ENCODE measurements at regions of chr7 and their contacts with region 1.

Region 1: GRCh38 chr7:117750612-117751563 is 122.4 kb downstream of the CTTNBP2 start:
- DNase-seq: peak; percentile 39
- H3K4me3 Mint-ChIP-seq: no peak overlapping the region
- H3K27ac Mint-ChIP-seq: no peak overlapping the region
- H3K4me1 Mint-ChIP-seq: no peaks in the 10 kb centered on the region
- H3K27me3 Mint-ChIP-seq: no peaks in the 10 kb centered on the region
- CTCF ChIP-seq: peak; percentile 64

Region 2: GRCh38 chr7:117772421-117772820 is 21.5 kb after region 1 on chr7:
- CTCF ChIA-PET with region 1: interaction called, 13 read pairs
- POLR2A ChIA-PET with region 1: no interaction called
- intact Hi-C with region 1: no loop called
- DNase-seq: no peak
- H3K4me3 Mint-ChIP-seq: no peak overlapping the region
- H3K27ac Mint-ChIP-seq: no peak overlapping the region
- H3K4me1 Mint-ChIP-seq: peaks cover 12% of the 10 kb centered on the region
- H3K27me3 Mint-ChIP-seq: peaks cover 26% of the 10 kb centered on the region
- CTCF ChIP-seq: no peak

Region 3: DNA sequence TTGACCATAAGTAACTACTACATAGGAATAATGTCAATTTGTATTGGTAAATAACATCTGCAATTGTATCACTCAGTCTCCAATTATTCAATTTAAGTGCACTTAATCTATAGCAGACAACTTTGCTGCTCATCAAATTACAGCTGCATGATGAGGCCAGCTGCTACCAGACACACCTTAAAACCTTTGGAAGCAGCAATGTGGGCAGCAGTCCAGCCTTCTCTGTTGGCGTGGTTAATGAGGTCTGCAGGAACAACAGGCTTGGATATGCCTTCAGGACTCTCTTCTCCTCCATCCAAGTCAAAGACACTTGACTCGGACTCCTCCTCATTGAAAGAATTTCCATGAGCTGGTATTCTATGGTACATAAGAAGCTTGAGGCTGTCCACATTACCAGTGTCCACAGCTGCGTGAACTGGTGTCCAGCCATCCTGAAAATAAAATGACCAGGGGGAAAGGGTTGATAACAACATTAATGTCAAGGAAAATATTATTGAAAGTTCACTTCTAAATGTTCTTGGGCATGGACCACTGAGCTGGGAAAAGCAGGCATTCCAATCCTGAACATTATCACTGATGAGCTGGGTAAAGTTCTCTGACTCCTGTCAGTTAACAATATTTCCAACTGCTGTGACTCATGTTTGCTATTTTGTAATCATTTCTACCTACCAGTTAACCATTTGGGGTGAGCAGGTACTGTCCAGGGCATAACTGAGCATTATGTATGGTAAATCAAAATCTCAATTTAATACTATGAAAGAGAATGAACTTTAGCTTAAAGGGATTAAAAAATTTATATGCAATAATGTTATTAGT is 26.7 kb after region 1 on chr7:
- CTCF ChIA-PET with region 1: interaction called, 13 read pairs
- POLR2A ChIA-PET with region 1: no interaction called
- intact Hi-C with region 1: no loop called
- DNase-seq: peak; percentile 48
- H3K4me3 Mint-ChIP-seq: no peak overlapping the region
- H3K27ac Mint-ChIP-seq: no peak overlapping the region
- H3K4me1 Mint-ChIP-seq: peaks cover 18% of the 10 kb centered on the region
- H3K27me3 Mint-ChIP-seq: peaks cover 11% of the 10 kb centered on the region
- CTCF ChIP-seq: no peak

Region 4: DNA sequence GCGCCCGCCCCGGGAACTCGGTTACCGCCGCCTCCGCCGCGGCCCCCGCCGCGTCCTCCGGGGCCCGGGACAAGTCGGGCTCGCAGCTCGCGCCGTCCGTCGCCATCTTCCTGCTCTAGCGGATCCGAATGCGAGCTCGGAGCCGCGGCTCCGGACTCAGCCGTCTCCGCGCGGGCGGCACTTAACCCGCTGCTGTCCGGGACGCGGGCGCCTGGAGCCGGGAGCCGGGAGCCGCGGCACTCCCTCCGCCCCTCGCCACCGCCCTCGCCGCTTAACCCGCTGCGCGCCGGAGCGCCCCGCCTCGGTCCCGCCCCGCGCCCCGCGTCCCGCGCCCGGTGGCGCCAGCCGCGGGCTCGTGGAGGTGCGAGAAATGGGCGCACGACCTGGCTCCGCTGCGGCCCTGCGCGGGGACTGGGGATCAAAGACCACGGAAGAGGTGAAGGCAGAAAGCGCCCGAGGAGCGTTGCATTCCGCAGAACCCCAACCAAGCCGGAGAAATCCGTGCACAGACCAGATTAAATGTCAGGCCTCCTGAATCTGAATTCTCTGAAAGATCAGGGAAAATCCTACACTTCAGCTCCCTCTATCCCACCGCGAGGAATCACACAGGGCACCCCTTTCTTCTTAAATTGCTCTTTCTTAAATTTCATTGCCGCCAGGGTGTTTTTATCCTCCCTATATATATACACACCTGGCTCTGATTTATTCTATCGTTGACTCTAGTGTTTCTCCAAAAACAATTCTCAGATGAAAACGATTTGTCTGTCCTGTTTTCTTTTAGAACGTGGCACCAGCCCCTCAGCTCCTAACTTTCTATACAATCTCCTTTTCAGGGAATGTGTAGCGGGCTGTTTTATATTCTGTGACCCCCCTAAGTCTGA is 122.7 kb after region 1 on chr7 and contains the start of gene CTTNBP2:
- CTCF ChIA-PET with region 1: interaction called, 3 read pairs
- POLR2A ChIA-PET with region 1: no interaction called
- intact Hi-C with region 1: loop called (anchors 2 kb)
- DNase-seq: peak; percentile 48
- H3K4me3 Mint-ChIP-seq: peak within 1 kb of the TSS; percentile 73
- H3K27ac Mint-ChIP-seq: no peak within 1 kb of the TSS
- H3K4me1 Mint-ChIP-seq: peaks cover 6% of the 10 kb centered on the region
- H3K27me3 Mint-ChIP-seq: peaks cover 33% of the 10 kb centered on the region
- CTCF ChIP-seq: no peak
- total RNA-seq, gene CTTNBP2: 0.17 and 0.98 TPM in 2 replicates

Region 5: GRCh38 chr7:118094040-118094439 is 343.2 kb after region 1 on chr7:
- CTCF ChIA-PET with region 1: interaction called, 10 read pairs
- POLR2A ChIA-PET with region 1: no interaction called
- intact Hi-C with region 1: no loop called
- DNase-seq: no peak
- H3K4me3 Mint-ChIP-seq: no peak overlapping the region
- H3K27ac Mint-ChIP-seq: no peak overlapping the region
- H3K4me1 Mint-ChIP-seq: no peaks in the 10 kb centered on the region
- H3K27me3 Mint-ChIP-seq: no peaks in the 10 kb centered on the region
- CTCF ChIP-seq: no peak

Region 6: GRCh38 chr7:118104812-118105441 is 354.0 kb after region 1 on chr7:
- CTCF ChIA-PET with region 1: interaction called, 12 read pairs
- POLR2A ChIA-PET with region 1: interaction called, 3 read pairs
- intact Hi-C with region 1: loop called (anchors 1 kb)
- DNase-seq: peak; percentile 44
- H3K4me3 Mint-ChIP-seq: no peak overlapping the region
- H3K27ac Mint-ChIP-seq: no peak overlapping the region
- H3K4me1 Mint-ChIP-seq: no peaks in the 10 kb centered on the region
- H3K27me3 Mint-ChIP-seq: no peaks in the 10 kb centered on the region
- CTCF ChIP-seq: peak; percentile 67